Right lobe of liver (tissue), 6 donors: ENCODE measurements at regions of chr5 and their contacts with region 1.

Region 1: GRCh38 chr5:158701406-158702177 is 398.1 kb downstream of the EBF1 start:
- DNase-seq: no peak
- ATAC-seq: no peak
- H3K4me3 ChIP-seq: no peak overlapping the region
- H3K27ac ChIP-seq: no peak overlapping the region
- H3K4me1 ChIP-seq: peaks cover 0 to 7% (median 0%) of the 10 kb centered on the region in 4 donors
- H3K27me3 ChIP-seq: no peaks in the 10 kb centered on the region
- CTCF ChIP-seq: no peak
- POLR2A ChIP-seq: no peak

Region 2: GRCh38 chr5:159106569-159107282 is 405.1 kb after region 1 on chr5:
- intact Hi-C with region 1: loop called in 1 of 2 experiments (anchors 10 kb)
- DNase-seq: peak; percentile 73 to 80 (median 74)
- ATAC-seq: peak; percentile 86 to 92 (median 89)
- H3K4me3 ChIP-seq: peak overlapping the region in 2 of 3 donors; percentile 23 to 43
- H3K27ac ChIP-seq: no peak overlapping the region
- H3K4me1 ChIP-seq: peaks cover 0 to 25% (median 2%) of the 10 kb centered on the region in 4 donors
- H3K27me3 ChIP-seq: peaks cover 7 to 34% of the 10 kb centered on the region in 2 donors
- CTCF ChIP-seq: peak; percentile 88 to 97 (median 95)
- POLR2A ChIP-seq: no peak